Activated CD4-positive, alpha-beta memory T cell treated with anti-CD3 and anti-CD28 coated beads for 36 hours (primary cell): ENCODE measurements at regions of chr1 and their contacts with region 1.

Region 1: GRCh38 chr1:1173793-1174415 is at the start of gene TTLL10:
- DNase-seq: peak; percentile 59
- H3K4me3 Mint-ChIP-seq: no peak within 1 kb of the TSS
- H3K27ac Mint-ChIP-seq: no peak within 1 kb of the TSS
- H3K4me1 Mint-ChIP-seq: peaks cover 12% of the 10 kb centered on the region
- H3K27me3 Mint-ChIP-seq: peaks cover 10% of the 10 kb centered on the region
- total RNA-seq, gene TTLL10: not detected

Region 2: DNA sequence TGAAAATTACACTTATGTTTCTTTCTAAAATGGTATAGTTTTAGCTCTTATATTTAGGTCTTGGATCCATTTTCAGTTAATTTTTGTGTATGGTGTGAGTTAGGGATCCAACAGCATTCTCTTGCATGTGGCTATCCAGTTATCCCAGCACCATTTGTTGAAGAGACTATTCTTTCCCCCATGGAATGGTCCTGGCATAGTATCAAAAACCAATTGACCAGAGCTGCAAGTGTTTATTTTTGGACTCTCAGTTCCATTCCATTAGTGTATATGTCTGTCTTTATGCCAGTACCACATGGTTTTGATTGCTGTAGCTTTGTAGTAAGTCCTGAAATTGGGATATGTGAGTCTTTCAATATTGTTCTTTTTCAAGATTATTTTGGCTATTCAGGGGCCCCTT is 14.0 kb after region 1 on chr1:
- CTCF ChIA-PET with region 1: no interaction called
- POLR2A ChIA-PET with region 1: no interaction called
- intact Hi-C with region 1: no loop called
- DNase-seq: no peak
- H3K4me3 Mint-ChIP-seq: no peak overlapping the region
- H3K27ac Mint-ChIP-seq: no peak overlapping the region
- H3K4me1 Mint-ChIP-seq: no peaks in the 10 kb centered on the region
- H3K27me3 Mint-ChIP-seq: no peaks in the 10 kb centered on the region

Region 3: DNA sequence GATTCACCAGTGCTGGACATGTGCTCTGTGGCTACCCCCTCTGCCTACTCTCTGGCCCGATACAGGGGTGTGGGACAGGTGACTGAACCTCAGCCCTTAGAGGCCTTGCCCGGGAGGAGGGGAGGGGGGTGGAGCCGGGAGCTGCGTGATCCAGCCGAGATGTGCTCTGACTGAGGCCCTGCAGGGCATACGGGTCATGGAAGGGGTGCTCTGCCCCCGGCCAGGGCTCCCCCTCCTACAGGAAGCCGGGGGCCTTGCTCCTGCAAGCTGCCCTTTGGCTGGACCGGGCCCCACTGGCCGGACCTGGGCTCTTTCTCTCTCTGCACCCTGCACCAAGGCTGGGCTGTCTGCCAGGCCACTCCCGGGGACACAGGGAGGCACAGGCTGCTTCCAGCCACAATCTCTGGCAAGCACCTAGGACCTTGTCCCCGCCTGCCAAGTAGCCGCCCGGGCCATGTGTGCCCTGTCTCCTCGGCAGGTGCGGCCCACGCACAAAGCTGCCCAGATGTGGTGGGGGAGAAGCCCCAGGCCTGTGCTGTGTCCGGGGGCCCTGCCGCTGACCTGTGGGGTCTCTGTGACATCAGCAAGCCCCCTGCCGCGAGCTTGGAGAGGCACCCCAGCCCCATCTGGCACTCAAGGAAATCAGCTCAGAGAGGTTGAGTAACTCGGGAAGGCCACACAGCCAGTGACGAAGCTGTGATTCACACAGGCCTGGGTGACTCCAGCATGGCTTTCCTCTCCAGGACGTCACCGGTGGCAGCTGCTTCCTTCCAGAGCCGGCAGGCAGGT is 107.8 kb after region 1 on chr1:
- CTCF ChIA-PET with region 1: no interaction called
- POLR2A ChIA-PET with region 1: no interaction called
- intact Hi-C with region 1: loop called (anchors 5 kb)
- DNase-seq: peak; percentile 56
- H3K4me3 Mint-ChIP-seq: no peak overlapping the region
- H3K27ac Mint-ChIP-seq: no peak overlapping the region
- H3K4me1 Mint-ChIP-seq: peaks cover 3% of the 10 kb centered on the region
- H3K27me3 Mint-ChIP-seq: no peaks in the 10 kb centered on the region